Dorsolateral prefrontal cortex (tissue), 120 donors: ENCODE measurements at regions of chr5 and their contacts with region 1.

Region 1: DNA sequence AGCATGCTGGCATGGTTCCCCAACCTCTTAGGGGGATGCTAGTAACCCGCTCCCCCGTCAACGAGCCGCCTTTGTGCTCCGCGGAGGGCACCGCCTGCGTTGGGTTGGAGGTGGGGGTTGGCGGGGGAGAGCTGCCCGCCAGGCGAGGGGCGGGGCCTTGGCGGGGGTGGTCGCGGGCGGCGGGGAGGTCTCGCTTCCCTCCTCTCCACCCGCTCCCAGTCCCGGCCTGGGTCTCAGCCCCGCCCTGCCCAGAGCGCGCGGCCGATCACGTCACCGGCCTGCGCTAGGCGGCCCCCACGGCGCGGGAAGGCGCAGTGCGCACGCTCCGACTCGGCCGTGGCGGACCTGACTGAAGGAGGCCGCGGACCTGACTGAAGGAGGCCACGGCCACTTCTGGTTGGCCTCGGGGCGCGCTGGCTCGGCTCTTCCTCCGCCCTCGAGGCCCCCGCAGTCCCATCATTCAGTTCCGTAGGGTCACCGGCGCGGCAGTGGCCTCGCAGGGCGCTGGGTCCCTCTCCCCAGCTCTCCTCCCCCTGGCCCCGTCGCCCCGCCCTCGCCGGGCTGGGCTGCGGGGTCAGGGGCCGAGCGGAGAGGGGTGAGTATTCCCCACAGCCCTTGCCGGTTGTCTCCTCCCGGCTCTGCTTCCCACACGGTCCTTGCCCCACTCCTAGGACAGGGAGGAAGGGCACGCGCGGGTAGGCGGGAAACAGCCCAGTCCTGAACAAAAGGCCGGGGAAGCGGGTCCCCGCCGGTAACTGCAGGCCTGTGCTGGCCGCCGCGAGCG is at the start of gene ATG10:
- DNase-seq: peak; percentile 81 to 98 (median 92)
- H3K4me3 ChIP-seq: peak within 1 kb of the TSS; percentile 55 to 96 (median 80)
- H3K27ac ChIP-seq: peak within 1 kb of the TSS; percentile 88 to 100 (median 99)
- H3K27me3 ChIP-seq: no peaks in the 10 kb centered on the region
- CTCF ChIP-seq: peak in 14 of 56 donors; percentile 2 to 44 (median 17)
- total RNA-seq, gene ATG10: 6.7 to 22.6 (median 12.7) TPM

Region 2: DNA sequence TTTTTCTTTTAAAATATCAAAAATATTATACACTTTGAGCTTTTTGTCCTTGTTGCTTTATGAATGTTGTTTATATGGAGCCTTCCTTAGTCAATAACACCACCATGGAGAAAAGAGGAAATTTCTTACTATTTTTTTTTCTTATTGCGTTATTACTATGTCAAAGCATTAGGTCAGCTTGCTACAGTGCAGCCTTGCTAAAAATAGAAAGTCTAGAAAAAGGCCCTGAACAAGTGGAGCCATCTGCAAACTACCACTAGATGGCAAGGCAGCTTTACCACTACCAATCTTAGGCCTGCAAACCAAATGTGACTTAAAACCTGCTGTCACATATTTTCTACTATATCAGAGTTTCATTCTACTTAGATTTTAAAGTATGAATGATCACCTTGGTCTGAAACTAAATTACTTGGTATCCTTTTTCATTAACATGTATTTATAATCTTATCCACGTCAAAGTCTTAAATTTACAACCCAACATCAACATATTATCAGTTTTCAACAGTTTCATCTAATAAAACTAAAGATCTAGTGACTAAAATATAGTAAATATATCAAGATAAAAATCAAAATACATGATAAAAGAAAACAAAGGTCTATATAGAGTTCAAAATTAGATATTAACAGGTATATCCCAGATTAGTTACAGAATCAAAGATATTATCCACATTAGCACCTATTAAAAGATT is 464.9 kb before region 1 on chr5:
- intact Hi-C with region 1: loop called in 1 of 2 experiments (anchors 10 kb)
- DNase-seq: peak in 7 of 10 donors; percentile 25 to 76 (median 50)
- H3K4me3 ChIP-seq: peak overlapping the region in 8 of 59 donors; percentile 1 to 54 (median 7)
- H3K27ac ChIP-seq: peak overlapping the region in 45 of 59 donors; percentile 0 to 80 (median 41)
- H3K27me3 ChIP-seq: no peaks in the 10 kb centered on the region
- CTCF ChIP-seq: peak; percentile 62 to 98 (median 89)

Region 3: DNA sequence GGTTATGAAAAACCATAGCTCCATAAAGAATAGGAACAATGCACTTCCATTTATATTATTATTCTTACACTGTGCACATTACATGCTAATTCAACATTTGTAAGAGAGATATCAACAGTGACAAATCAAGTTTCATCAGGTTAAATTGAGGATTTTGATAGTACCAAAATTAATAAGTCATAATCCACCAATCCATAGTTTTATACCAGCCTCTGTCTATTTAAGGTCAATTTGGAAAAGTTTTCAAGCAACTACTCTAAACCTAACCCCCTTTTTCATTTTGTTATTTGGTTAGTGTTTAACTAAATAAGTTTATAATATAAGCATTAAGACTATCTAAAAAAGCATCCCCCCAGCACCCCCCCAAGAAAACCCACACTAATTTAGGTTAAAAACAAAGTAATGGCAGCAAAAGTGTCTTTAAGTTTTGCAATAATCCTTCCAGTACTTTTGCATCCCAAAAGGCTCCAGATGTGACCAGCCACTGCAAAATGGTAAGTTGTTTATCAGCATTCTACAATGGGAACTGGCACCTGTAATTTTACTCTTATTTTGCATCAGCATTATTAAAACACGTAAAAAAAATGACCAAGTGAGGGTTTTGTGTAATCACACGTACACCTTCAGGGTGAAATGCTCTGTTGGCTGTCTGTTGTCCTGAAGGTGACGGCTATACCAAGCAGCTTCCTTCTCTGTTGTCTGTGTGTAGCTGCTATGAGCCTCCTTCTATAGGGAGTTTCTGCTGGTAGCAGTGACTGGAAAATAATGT is 184.2 kb before region 1 on chr5:
- intact Hi-C with region 1: loop called in 1 of 2 experiments (anchors 10 kb)
- DNase-seq: peak in 1 of 10 donors; percentile 68
- H3K4me3 ChIP-seq: peak overlapping the region in 24 of 59 donors; percentile 2 to 38 (median 14)
- H3K27ac ChIP-seq: peak overlapping the region in 40 of 59 donors; percentile 7 to 72 (median 50)
- H3K27me3 ChIP-seq: no peaks in the 10 kb centered on the region
- CTCF ChIP-seq: no peak

Region 4: GRCh38 chr5:81856948-81857928 is 114.7 kb before region 1 on chr5:
- intact Hi-C with region 1: loop called in 1 of 2 experiments (anchors 2 kb)
- DNase-seq: peak; percentile 63 to 98 (median 82)
- H3K4me3 ChIP-seq: peak overlapping the region in 47 of 59 donors; percentile 1 to 53 (median 27)
- H3K27ac ChIP-seq: peak overlapping the region; percentile 5 to 98 (median 80)
- H3K27me3 ChIP-seq: no peaks in the 10 kb centered on the region
- CTCF ChIP-seq: peak in 47 of 56 donors; percentile 8 to 56 (median 34)

Region 5: GRCh38 chr5:82018462-82018861 is 46.6 kb after region 1 on chr5:
- intact Hi-C with region 1: loop called in 1 of 2 experiments (anchors 5 kb)
- DNase-seq: peak in 3 of 10 donors; percentile 3 to 47 (median 33)
- H3K4me3 ChIP-seq: no peak overlapping the region
- H3K27ac ChIP-seq: peak overlapping the region in 12 of 59 donors; percentile 11 to 63 (median 35)
- H3K27me3 ChIP-seq: no peaks in the 10 kb centered on the region
- CTCF ChIP-seq: peak in 4 of 56 donors; percentile 3 to 18 (median 9)

Region 6: GRCh38 chr5:82165740-82166530 is 194.0 kb after region 1 on chr5:
- intact Hi-C with region 1: loop called in 1 of 2 experiments (anchors 5 kb)
- DNase-seq: peak in 9 of 10 donors; percentile 49 to 81 (median 69)
- H3K4me3 ChIP-seq: no peak overlapping the region
- H3K27ac ChIP-seq: peak overlapping the region in 51 of 59 donors; percentile 7 to 87 (median 57)
- H3K27me3 ChIP-seq: no peaks in the 10 kb centered on the region
- CTCF ChIP-seq: peak; percentile 58 to 90 (median 79)